GM12878 (cell line): ENCODE measurements at regions of chr17 and their contacts with region 1.

Region 1: GRCh38 chr17:40026816-40027613 is 11.8 kb downstream of the CSF3 start:
- DNase-seq: peak; percentile 12
- ATAC-seq: peak; percentile 100
- H3K4me3 ChIP-seq: no peak overlapping the region
- H3K27ac ChIP-seq: no peak overlapping the region
- H3K4me1 ChIP-seq: no peaks in the 10 kb centered on the region
- H3K27me3 ChIP-seq: no peaks in the 10 kb centered on the region
- CTCF ChIP-seq: peak; percentile 80 to 88 (median 86)
- EP300 ChIP-seq: no peak
- POLR2A ChIP-seq: no peak
- RAD21 ChIP-seq: peak; percentile 63

Region 2: GRCh38 chr17:40015005-40015997 is 11.7 kb before region 1 on chr17 and contains the start of gene CSF3:
- CTCF ChIA-PET with region 1: interaction called, 31 read pairs
- POLR2A ChIA-PET with region 1: interaction called, 4 read pairs
- RAD21 ChIA-PET with region 1: interaction called, 5 read pairs
- SMC1A ChIA-PET with region 1: interaction called, 8 read pairs
- in situ Hi-C with region 1: no loop called
- intact Hi-C with region 1: no loop called
- DNase-seq: no peak
- ATAC-seq: 0 out of 3 replicates have a peak, but pooled peaks have one; percentile 16
- H3K4me3 ChIP-seq: no peak within 1 kb of the TSS
- H3K27ac ChIP-seq: no peak within 1 kb of the TSS
- H3K4me1 ChIP-seq: peaks cover 8% of the 10 kb centered on the region
- H3K27me3 ChIP-seq: no peaks in the 10 kb centered on the region
- CTCF ChIP-seq: no peak
- EP300 ChIP-seq: no peak
- POLR2A ChIP-seq: no peak
- RAD21 ChIP-seq: no peak
- polyA plus RNA-seq, gene CSF3: 0.09 TPM in 1 of 2 experiments, not detected in the other

Region 3: DNA sequence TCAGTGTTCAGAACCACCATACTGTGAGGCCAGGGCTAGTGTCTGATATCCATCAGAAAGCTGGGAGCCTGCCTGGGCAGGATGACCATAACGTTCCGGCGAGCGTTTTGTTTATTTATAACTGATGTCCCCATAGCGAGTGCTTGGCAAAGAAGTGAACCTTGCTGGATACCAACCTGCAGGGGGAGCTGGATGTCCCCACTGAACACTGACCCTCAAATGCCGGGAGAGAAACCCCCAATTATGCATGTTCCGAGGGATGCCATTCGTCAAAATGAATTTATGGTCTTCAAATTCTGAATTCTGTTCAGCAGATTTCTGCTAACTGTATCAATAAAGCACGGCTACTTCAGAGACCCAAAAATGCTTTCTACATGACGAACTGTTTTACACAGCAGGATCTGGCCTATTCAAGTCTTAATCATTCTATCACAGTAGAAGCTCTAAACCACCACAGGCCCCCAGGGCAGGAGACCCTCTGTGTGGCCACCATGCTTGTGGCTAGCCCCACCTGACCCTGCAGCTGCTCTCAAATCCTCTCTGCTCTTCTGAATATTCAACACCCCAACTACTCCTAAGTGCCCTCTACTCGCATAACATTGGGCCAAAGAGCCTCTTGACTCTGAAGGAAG is 12.0 kb after region 1 on chr17:
- CTCF ChIA-PET with region 1: interaction called, 10 read pairs
- POLR2A ChIA-PET with region 1: no interaction called
- RAD21 ChIA-PET with region 1: no interaction called
- SMC1A ChIA-PET with region 1: no interaction called
- in situ Hi-C with region 1: no loop called
- intact Hi-C with region 1: no loop called
- DNase-seq: no peak
- ATAC-seq: no peak
- H3K4me3 ChIP-seq: no peak overlapping the region
- H3K27ac ChIP-seq: no peak overlapping the region
- H3K4me1 ChIP-seq: no peaks in the 10 kb centered on the region
- H3K27me3 ChIP-seq: no peaks in the 10 kb centered on the region
- CTCF ChIP-seq: peak; percentile 18 to 35 (median 27); a peak in 3 of 6 replicates
- EP300 ChIP-seq: no peak
- POLR2A ChIP-seq: no peak
- RAD21 ChIP-seq: 0 out of 2 replicates have a peak, but pooled peaks have one; percentile 21